ENCODE measurements at regions of chr9 and their contacts with region 1.

Region 1: GRCh38 chr9:97710356-97711222 is 13.4 kb upstream of the XPA start:
- ATAC-seq: peak; percentile 80 to 98 (median 91)
- H3K4me3 ChIP-seq: no peak overlapping the region
- H3K27ac ChIP-seq: no peak overlapping the region
- H3K4me1 ChIP-seq: no peaks in the 10 kb centered on the region

Region 2: DNA sequence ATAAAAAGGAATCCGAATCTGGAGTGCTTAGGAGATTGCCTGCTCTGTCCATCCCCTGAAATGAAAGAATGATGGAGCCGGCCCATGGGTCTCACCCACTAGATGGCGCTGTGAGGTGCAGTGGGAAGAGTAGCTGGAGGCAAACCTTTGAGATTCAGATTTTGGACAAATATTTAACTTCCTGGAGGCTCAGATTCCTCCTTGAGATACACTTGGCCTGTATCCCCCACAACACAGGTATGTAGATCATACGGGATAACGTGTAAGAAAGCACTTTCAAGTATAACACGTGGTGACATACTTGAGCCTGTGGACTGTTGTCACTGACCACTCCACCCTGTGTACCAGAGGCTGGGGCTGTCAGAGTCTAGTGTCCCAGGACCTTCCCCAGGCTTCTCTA is 179.4 kb after region 1 on chr9:
- in situ Hi-C with region 1: loop called in 5 of 9 experiments (anchors 10 to 25 kb)
- ATAC-seq: peak in 3 of 8 experiments; percentile 66 to 80 (median 77)
- H3K4me3 ChIP-seq: no peak overlapping the region
- H3K27ac ChIP-seq: no peak overlapping the region
- H3K4me1 ChIP-seq: no peaks in the 10 kb centered on the region

Region 3: DNA sequence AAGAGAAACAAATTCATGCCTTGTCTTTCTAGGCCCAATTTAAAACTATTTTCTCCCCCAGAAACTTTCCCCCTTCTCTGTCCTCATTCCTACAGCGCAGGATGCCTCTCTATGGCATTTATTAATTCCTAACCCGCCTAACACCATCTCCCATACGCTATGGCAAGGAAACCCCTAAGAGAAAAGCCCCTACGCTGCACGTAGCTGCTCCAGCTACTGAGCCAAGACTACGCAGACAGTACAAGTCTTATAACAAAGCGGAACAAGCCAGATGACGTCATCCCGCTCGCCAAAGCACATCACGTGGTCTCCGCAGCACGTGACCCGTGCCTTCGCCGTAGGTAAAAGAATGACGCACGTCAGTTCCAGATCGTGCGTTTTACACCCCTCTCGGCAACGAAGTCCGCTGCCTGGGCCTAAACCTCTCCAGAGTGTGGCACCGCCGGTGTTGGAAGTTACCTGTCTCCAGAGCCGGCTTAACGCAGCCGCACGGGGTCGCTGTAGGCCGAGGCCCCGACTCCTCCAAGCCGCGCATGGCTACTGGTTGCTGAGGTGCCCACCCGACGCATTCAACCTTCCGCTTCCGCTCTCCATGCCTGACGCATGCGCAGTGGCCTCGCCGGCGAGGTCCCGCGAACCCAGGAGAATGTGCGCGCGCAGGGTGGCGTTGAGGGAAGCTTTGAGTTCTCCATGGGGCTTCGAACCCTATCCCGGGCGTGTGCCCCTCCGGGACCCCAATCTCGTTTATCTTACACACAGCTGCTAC is 211.6 kb after region 1 on chr9 and contains the start of gene TRMO:
- in situ Hi-C with region 1: loop called in 1 of 9 experiments (anchors 25 kb)
- ATAC-seq: peak; percentile 82 to 94 (median 90)
- H3K4me3 ChIP-seq: peak within 1 kb of the TSS; percentile 44 to 64 (median 57)
- H3K27ac ChIP-seq: peak within 1 kb of the TSS; percentile 96 to 97
- H3K4me1 ChIP-seq: peaks cover 6 to 7% of the 10 kb centered on the region in 2 donors
- total RNA-seq, gene TRMO: 4.3 to 19.5 (median 11.5) TPM